WTC11 (cell line): ENCODE measurements at regions of chr7 and their contacts with region 1.

Region 1: DNA sequence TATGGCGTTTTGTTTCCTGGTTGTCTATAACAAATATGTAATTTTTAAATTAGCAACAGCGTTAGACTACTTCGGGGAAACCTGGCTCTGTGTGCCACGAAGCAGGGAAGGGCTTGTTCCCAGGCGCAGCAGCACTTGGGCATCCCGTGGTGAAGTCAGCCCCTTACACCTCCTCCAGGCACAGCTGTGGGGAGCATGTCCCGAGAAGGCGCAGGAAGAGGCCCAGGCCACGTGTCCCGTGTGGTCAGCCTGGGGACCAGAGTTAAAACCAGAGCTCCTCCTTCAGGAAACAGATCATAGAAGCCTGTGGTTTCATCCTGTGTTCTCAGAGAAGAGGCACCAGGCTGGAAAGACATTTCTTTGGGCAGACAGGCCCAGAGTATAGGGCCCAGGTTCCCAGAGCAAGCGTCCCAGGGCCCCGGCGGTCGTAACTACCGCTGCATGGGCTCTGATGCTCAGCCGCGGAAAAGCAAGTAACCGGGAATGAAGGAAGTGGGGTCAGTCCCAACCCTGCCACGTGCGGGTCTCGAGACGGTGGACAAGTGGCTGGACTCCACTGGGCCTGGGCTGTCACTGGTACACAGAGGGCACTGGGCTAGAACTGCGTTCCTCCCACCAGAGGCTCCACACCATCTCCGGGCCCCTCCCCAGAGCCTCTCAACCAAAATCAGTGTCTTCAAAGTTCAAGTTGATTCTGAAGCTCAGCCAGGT is 7.1 kb downstream of the NUDT1 start:
- DNase-seq: no peak
- ATAC-seq: no peak
- H3K4me3 Mint-ChIP-seq: no peak overlapping the region
- H3K27ac Mint-ChIP-seq: peak overlapping the region; percentile 68; the same call in 1 of the 2 replicates
- H3K4me1 Mint-ChIP-seq: peaks cover 6% of the 10 kb centered on the region; the same call in 1 of the 2 replicates
- H3K27me3 Mint-ChIP-seq: no peaks in the 10 kb centered on the region
- CTCF ChIP-seq: no peak

Region 2: GRCh38 chr7:1159891-1160668 is 1089.1 kb before region 1 on chr7 and contains the start of gene ZFAND2A:
- CTCF ChIA-PET with region 1: interaction called, 10 read pairs
- POLR2A ChIA-PET with region 1: no interaction called
- DNase-seq: peak; percentile 99
- ATAC-seq: peak; percentile 98
- H3K4me3 Mint-ChIP-seq: peak within 1 kb of the TSS; percentile 80
- H3K27ac Mint-ChIP-seq: peak within 1 kb of the TSS; percentile 72
- H3K4me1 Mint-ChIP-seq: peaks cover 14% of the 10 kb centered on the region
- H3K27me3 Mint-ChIP-seq: no peaks in the 10 kb centered on the region
- CTCF ChIP-seq: no peak
- total RNA-seq, gene ZFAND2A: 14.5 to 16.1 TPM (median 15.3 TPM) in 3 replicates

Region 3: GRCh38 chr7:2353113-2353935 is 104.2 kb after region 1 on chr7:
- CTCF ChIA-PET with region 1: interaction called, 23 read pairs
- POLR2A ChIA-PET with region 1: no interaction called
- DNase-seq: no peak
- ATAC-seq: no peak; the same call in 1 of the 2 replicates
- H3K4me3 Mint-ChIP-seq: peak overlapping the region; percentile 85
- H3K27ac Mint-ChIP-seq: peak overlapping the region; percentile 100
- H3K4me1 Mint-ChIP-seq: peaks cover 17% of the 10 kb centered on the region
- H3K27me3 Mint-ChIP-seq: no peaks in the 10 kb centered on the region
- CTCF ChIP-seq: no peak